ENCODE measurements at regions of chr1 and their contacts with region 1.

Region 1: GRCh38 chr1:156813750-156814570 is 2.7 kb downstream of the SH2D2A start:
- DNase-seq: peak; percentile 74
- H3K4me3 Mint-ChIP-seq: peak overlapping the region; percentile 80
- H3K27ac Mint-ChIP-seq: peak overlapping the region; percentile 99
- H3K4me1 Mint-ChIP-seq: peaks cover 81% of the 10 kb centered on the region
- H3K27me3 Mint-ChIP-seq: no peaks in the 10 kb centered on the region

Region 2: GRCh38 chr1:156625436-156626078 is 188.4 kb before region 1 on chr1:
- CTCF ChIA-PET with region 1: no interaction called
- POLR2A ChIA-PET with region 1: no interaction called
- DNase-seq: peak; percentile 71
- H3K4me3 Mint-ChIP-seq: peak overlapping the region; percentile 55
- H3K27ac Mint-ChIP-seq: peak overlapping the region; percentile 21
- H3K4me1 Mint-ChIP-seq: peaks cover 12% of the 10 kb centered on the region
- H3K27me3 Mint-ChIP-seq: peaks cover 66% of the 10 kb centered on the region

Region 3: GRCh38 chr1:156733989-156734584 is 79.9 kb before region 1 on chr1:
- CTCF ChIA-PET with region 1: no interaction called
- POLR2A ChIA-PET with region 1: no interaction called
- DNase-seq: no peak
- H3K4me3 Mint-ChIP-seq: no peak overlapping the region
- H3K27ac Mint-ChIP-seq: no peak overlapping the region
- H3K4me1 Mint-ChIP-seq: peaks cover 21% of the 10 kb centered on the region
- H3K27me3 Mint-ChIP-seq: no peaks in the 10 kb centered on the region

Region 4: GRCh38 chr1:156797212-156797871 is 16.6 kb before region 1 on chr1:
- CTCF ChIA-PET with region 1: interaction called, 23 read pairs
- POLR2A ChIA-PET with region 1: interaction called, 3 read pairs
- DNase-seq: peak; percentile 77
- H3K4me3 Mint-ChIP-seq: no peak overlapping the region
- H3K27ac Mint-ChIP-seq: no peak overlapping the region
- H3K4me1 Mint-ChIP-seq: peaks cover 20% of the 10 kb centered on the region
- H3K27me3 Mint-ChIP-seq: no peaks in the 10 kb centered on the region

Region 5: DNA sequence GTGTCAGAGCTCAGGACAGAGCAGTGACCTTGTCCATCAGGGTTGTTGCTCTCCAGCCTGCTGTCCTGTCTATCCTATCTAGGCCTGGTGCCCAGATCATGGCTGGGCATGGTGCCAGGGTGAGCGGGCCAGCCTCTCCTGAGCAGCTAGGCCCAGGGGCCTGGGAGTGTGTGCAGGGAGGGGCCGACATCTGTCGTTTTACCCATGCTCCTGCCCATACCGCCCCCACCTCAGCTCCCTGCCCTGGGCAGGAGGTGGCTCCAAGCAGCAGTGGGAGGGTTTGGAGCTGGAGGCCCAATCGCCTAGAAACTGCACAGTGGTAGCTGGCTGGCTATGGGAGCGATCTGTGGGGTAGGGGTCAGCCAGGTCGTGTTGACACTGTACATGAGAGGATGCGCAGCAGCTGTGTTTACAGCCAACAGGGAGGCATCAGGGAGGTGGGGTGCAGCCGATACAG is 38.5 kb after region 1 on chr1:
- CTCF ChIA-PET with region 1: interaction called, 247 read pairs
- POLR2A ChIA-PET with region 1: interaction called, 4 read pairs
- DNase-seq: no peak
- H3K4me3 Mint-ChIP-seq: no peak overlapping the region
- H3K27ac Mint-ChIP-seq: no peak overlapping the region
- H3K4me1 Mint-ChIP-seq: peaks cover 20% of the 10 kb centered on the region
- H3K27me3 Mint-ChIP-seq: peaks cover 28% of the 10 kb centered on the region